Sciatic nerve (tissue), 2 donors: ENCODE measurements at regions of chr2 and their contacts with region 1.

Region 1: DNA sequence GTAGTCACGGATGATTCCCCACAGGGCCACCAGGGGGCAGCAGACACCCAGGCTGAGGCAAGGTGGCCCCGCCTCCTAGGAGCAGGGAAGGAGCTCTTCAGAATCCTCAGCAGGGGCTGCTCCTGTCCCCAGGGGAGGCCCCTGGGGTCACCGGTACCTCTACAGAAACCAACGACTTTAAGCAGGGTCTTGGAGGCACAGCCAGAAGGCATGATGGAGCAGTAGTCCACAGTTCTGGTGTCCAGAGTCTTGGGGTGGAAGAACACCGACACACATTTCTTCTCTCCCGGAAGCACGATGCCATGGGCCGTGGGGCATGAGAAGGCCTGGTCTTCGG is 11.5 kb downstream of the CFAP65 start:
- DNase-seq: peak; percentile 86
- ATAC-seq: peak; percentile 77

Region 2: DNA sequence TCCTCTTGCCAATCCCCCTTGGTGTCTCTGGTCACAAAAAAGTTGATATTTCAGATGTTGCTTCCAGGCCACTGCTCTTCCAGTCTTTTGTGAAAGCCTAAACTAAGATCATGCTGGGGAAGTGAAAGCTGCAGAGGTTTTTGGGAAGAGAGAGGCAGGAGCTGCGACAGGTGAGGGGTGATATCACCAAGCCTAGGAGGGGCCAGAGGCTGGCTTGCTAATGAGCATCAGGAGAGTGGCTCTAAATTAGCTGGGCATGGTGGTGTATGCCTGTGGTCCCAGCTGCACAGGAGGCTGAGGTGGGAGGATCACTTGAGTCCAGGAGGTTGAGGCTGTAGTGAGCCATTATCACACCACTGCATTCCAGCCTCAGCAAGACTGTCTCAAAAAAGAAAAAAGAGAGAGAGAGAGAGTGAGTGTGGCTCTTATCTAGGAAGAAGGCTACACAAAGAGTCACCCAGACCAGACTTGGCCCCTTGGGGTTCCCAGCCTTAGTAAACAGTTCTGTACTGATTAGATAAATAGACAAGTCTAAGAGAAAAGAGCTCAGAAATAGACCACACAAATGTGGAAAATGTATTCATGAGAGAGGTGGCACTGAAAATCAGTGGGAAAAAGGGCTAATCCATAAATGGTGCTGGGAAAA is 84.9 kb before region 1 on chr2:
- intact Hi-C with region 1: no loop called
- DNase-seq: no peak
- ATAC-seq: no peak

Region 3: GRCh38 chr2:219142329-219142728 is 112.5 kb after region 1 on chr2:
- intact Hi-C with region 1: loop called (anchors 10 kb)
- DNase-seq: no peak
- ATAC-seq: no peak